Activated T-helper 2 cell treated with anti-CD3 and anti-CD28 coated beads, Interferon-gamma antibody, Interleukin-2, Interleukin-4, amounts not matched to agents 10 μg/mL and 5 μg/mL and 100 μg/mL, durations not matched to agents 14 hours and 24 hours and 36 hours (primary cell): ENCODE measurements at regions of chr7 and their contacts with region 1.

Region 1: GRCh38 chr7:80175744-80176143 is 41.1 kb downstream of the GNAI1 start:
- DNase-seq: no peak
- H3K4me3 Mint-ChIP-seq: no peak overlapping the region
- H3K27ac Mint-ChIP-seq: no peak overlapping the region
- H3K4me1 Mint-ChIP-seq: peaks cover 18% of the 10 kb centered on the region
- H3K27me3 Mint-ChIP-seq: no peaks in the 10 kb centered on the region

Region 2: DNA sequence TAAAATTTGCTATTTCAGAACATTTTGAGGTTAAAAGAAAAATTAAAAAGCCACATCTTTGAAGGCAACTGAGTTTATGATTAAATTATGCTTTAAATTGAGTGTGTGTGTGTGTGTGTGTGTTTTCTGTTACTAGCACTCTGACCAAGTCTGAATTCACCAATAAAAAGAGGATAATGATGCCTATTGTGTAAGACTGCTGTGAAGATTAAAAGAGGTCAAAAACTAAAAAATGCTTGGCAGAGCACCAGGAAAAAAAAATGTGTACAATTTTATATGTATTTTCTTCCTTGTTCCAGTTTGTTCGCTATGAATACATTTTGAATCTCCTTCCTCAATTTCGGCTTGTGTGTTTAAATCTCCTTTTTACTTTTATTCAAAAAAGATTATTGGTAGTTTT is 405.7 kb before region 1 on chr7:
- intact Hi-C with region 1: no loop called
- DNase-seq: no peak
- H3K4me3 Mint-ChIP-seq: no peak overlapping the region
- H3K27ac Mint-ChIP-seq: no peak overlapping the region
- H3K4me1 Mint-ChIP-seq: no peaks in the 10 kb centered on the region
- H3K27me3 Mint-ChIP-seq: no peaks in the 10 kb centered on the region

Region 3: DNA sequence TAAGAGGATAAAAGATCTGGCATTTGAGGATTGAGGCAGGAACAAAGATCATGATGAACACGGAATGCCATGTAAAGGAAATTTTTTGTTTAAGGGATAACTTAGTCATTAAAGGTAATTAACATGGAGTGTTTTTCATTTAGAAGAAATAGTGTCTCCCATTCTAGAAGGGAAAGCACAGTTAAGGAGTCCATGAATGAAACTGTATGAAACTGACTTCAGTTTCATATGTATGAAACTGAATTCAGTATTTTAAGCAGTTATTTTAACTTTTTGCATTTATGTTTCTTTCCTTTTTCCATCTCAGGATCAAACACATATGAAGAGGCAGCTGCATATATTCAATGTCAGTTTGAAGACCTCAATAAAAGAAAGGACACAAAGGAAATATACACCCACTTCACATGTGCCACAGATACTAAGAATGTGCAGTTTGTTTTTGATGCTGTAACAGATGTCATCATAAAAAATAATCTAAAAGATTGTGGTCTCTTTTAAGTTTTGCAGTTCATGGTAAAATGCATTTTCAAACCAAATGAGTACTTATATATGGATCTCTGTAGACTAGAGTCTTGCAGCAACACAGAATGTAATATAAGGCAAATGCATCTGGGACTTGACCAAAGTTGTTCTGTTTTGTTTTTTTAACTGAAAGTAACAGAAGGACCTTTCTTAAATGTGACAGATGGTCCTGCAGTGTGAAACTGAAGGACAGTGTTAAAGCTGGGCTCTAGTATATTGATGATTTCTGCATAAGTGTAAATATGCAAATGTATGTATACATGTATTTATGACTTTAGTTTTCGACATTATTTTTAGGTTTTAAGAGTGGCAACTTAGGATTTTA is 41.5 kb after region 1 on chr7:
- intact Hi-C with region 1: loop called (anchors 1 kb)
- DNase-seq: no peak
- H3K4me3 Mint-ChIP-seq: no peak overlapping the region
- H3K27ac Mint-ChIP-seq: no peak overlapping the region
- H3K4me1 Mint-ChIP-seq: peaks cover 10% of the 10 kb centered on the region
- H3K27me3 Mint-ChIP-seq: no peaks in the 10 kb centered on the region